ENCODE measurements at regions of chr16 and their contacts with region 1.

Region 1: GRCh38 chr16:66516808-66517585 is 32.9 kb downstream of the TK2 start:
- DNase-seq: peak; percentile 75 to 86
- ATAC-seq: peak; percentile 89 to 95 (median 93)
- H3K4me3 ChIP-seq: peak overlapping the region; percentile 19
- H3K4me3 Mint-ChIP-seq: peak overlapping the region; percentile 88
- H3K27ac ChIP-seq: peak overlapping the region; percentile 94
- H3K27ac Mint-ChIP-seq: peak overlapping the region; percentile 99
- H3K4me1 ChIP-seq: peaks cover 71% of the 10 kb centered on the region
- H3K4me1 Mint-ChIP-seq: peaks cover 60 to 64% of the 10 kb centered on the region in 2 donors
- H3K27me3 ChIP-seq: no peaks in the 10 kb centered on the region
- H3K27me3 Mint-ChIP-seq: no peaks in the 10 kb centered on the region
- CTCF ChIP-seq: no peak

Region 2: DNA sequence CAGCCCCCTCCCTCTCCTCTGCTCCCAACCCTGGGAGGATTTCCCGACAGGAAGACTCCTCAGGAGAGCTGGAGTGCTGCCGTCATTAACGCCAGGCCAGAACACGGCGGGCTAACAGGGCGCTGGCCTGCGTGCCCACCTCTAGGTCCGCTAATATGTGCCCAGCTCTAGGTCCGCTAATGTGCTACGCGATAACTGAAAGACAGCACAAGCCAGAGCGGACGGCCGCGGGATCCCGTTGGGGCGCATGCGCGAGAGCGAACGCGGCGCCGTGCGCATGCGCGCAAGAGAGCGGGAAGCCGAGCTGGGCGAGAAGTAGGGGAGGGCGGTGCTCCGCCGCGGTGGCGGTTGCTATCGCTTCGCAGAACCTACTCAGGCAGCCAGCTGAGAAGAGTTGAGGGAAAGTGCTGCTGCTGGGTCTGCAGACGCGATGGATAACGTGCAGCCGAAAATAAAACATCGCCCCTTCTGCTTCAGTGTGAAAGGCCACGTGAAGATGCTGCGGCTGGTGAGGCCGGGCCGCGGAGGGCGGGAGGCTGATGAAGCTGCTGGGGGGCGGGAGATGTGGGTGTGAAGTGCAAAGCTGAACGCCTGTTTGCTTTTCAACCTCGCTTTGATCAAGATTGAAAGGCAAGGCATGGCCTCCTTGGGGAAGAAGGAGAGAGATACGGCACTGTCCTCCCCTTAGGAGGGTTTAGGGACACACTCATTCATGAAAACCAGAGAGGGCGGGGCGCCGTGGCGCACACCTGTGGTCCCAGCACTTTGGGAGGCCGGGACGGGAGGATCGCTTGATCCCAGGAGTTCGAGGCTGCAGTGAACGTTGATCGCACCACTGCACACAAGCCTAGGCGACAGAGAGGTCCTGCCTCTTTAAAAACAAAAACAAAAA is 35.5 kb after region 1 on chr16 and contains the start of gene CKLF:
- intact Hi-C with region 1: loop called (anchors 2 kb)
- DNase-seq: peak; percentile 93 to 97
- ATAC-seq: peak; percentile 66 to 89 (median 85)
- H3K4me3 ChIP-seq: peak within 1 kb of the TSS; percentile 75
- H3K4me3 Mint-ChIP-seq: peak within 1 kb of the TSS; percentile 89
- H3K27ac ChIP-seq: peak within 1 kb of the TSS; percentile 82
- H3K27ac Mint-ChIP-seq: peak within 1 kb of the TSS; percentile 96 to 97
- H3K4me1 ChIP-seq: peaks cover 62% of the 10 kb centered on the region
- H3K4me1 Mint-ChIP-seq: peaks cover 81 to 82% of the 10 kb centered on the region in 2 donors
- H3K27me3 ChIP-seq: no peaks in the 10 kb centered on the region
- H3K27me3 Mint-ChIP-seq: peaks cover 0 to 2% of the 10 kb centered on the region in 2 donors
- CTCF ChIP-seq: no peak
- total RNA-seq, gene CKLF: 48.0 to 69.7 (median 54.6) TPM

Region 3: DNA sequence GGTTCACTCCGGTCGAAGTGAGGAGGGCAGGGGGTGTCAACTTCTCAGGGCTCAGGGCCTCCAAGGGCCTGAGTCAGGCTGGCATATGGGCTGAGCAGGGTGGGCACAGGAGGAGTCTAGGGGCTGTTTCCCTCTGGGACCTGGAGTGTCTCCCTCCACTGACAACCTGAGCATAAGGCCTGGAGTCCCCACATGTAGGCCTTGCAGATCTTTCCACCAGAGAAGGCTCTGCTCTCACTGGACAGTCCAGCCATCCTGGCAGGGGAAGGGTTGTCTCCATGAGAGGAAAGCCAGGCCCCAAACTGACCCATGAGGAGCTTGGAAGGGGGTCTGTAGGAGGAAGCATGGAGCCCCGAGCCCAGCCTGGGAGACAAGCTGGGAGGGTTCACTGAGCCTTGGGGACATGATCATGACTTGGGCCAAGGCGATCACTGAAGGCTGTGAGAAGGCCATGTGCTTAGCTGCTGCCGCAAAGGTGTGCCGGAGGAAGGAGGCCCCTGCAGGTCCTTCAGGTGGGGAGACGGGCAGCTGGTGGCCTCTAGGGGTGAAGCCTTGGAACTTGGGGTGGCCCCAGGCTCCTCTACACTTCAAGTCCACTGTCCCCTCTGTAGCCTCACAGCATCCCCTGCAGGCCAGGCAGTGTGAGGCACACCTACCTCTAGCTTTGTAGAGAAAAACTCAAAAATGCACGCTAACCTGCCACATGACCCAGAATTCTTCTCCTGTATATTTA is 72.2 kb after region 1 on chr16:
- intact Hi-C with region 1: loop called (anchors 5 kb)
- DNase-seq: peak; percentile 60 to 82
- ATAC-seq: peak; percentile 98 to 100 (median 99)
- H3K4me3 ChIP-seq: no peak overlapping the region
- H3K4me3 Mint-ChIP-seq: peak overlapping the region; percentile 77
- H3K27ac ChIP-seq: no peak overlapping the region
- H3K27ac Mint-ChIP-seq: peak overlapping the region; percentile 19 to 63
- H3K4me1 ChIP-seq: peaks cover 15% of the 10 kb centered on the region
- H3K4me1 Mint-ChIP-seq: peaks cover 16 to 17% of the 10 kb centered on the region in 2 donors
- H3K27me3 ChIP-seq: no peaks in the 10 kb centered on the region
- H3K27me3 Mint-ChIP-seq: peaks cover 0 to 2% of the 10 kb centered on the region in 2 donors
- CTCF ChIP-seq: peak; percentile 86

Measured in natural killer cell (primary cell).